K562 (cell line): ENCODE measurements at regions of chr17 and their contacts with region 1.

Region 1: DNA sequence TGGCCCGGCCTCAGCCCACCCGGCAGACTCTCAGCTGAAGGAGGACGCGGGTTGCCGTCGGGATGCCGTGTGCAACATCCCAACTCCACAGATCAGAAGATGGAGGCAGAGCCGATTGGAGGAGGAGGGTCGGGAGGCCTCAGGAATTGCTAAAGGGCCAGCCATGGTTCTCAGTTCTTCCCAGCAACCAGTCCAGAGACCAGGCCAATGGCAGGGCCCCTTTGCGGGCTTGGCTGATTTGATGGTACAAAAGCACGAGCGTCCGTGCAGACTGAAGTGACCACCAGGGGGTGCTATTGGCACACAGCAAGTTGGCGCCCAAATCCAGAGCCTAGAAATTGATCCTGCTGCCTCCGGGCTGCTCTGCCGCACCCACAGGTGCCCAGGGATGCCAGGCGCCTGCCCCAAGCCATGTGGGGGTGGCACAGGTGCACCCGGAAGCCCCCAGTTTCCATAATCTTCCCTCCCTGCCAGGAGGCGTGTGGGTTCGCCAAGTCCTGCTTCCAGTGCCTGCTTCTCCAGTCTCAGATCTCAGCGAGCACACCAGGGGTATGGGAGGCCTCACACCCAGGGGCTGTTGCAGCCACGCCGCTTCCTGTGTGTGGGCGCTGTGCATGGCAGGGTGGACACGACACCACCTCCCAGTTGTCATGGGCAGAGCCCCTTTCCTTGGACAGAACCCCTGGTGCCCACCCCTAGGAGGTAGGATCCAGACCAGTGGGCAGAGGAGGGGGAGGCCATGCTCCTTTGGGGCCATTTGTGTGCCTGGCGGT is 7.1 kb upstream of the TEX19 start:
- DNase-seq: peak; percentile 68 to 92 (median 74)
- ATAC-seq: peak; percentile 94
- H3K4me3 ChIP-seq: no peak overlapping the region
- H3K27ac ChIP-seq: no peak overlapping the region
- H3K4me1 ChIP-seq: peaks cover 11 to 59% of the 10 kb centered on the region in 2 experiments; a peak in 4 of 5 replicates
- H3K27me3 ChIP-seq: no peaks in the 10 kb centered on the region
- CTCF ChIP-seq: peak; percentile 90 to 95 (median 93)
- EP300 ChIP-seq: no peak
- POLR2A ChIP-seq: no peak
- RAD21 ChIP-seq: peak; percentile 87 to 94

Region 2: DNA sequence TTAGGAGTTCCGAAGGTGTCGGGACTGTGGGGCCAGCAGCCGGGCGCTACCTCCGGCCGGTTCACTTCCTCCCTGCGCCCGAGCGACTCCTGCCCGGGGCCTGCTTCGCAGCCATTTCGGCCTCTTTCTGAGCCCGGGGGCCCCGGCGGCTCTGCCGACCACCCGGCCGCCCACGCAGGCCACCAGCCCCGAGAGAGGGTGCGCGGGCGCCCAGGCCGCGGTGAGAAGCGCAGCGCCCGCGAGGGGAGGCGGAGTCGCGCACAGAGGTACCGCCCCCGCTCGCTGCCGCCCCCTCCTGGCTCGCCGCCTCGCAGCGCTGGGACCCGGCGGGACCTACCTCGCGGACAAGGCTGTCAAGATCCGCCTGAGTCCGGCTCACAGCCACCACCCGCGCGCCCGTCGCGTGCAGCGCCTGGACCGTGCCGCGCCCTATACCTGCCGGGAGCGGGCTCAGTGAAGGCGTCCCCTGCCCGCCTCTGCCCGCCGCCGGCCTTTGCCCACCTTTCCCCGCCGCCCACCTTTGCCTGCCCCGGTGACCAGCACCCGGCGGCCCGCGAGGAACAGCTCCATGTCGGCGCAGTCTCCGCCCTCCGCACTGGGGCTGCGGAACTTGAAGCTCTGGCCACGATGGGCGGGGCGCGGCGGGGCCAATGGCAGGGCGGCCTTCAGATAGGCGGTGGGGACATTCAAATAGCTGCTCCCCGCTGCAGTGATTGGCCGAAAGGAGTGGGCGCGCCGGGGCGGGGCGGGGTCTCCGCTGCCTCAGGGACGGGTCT is 314.6 kb before region 1 on chr17 and contains the start of gene DCXR:
- CTCF ChIA-PET with region 1: no interaction called
- POLR2A ChIA-PET with region 1: no interaction called
- in situ Hi-C with region 1: no loop called
- intact Hi-C with region 1: loop called (anchors 10 kb)
- DNase-seq: peak; percentile 95 to 99 (median 97)
- ATAC-seq: peak; percentile 95
- H3K4me3 ChIP-seq: peak within 1 kb of the TSS; percentile 97
- H3K27ac ChIP-seq: peak within 1 kb of the TSS; percentile 98
- H3K4me1 ChIP-seq: peaks cover 26 to 68% of the 10 kb centered on the region in 2 experiments
- H3K27me3 ChIP-seq: no peaks in the 10 kb centered on the region
- CTCF ChIP-seq: peak; percentile 81 to 95 (median 93)
- EP300 ChIP-seq: no peak
- POLR2A ChIP-seq: peak; percentile 99
- RAD21 ChIP-seq: peak; percentile 31 to 50
- polyA plus RNA-seq, gene DCXR: 21.3 to 50.3 TPM

Region 3: GRCh38 chr17:82494236-82495055 is 142.5 kb after region 1 on chr17:
- CTCF ChIA-PET with region 1: interaction called, 5 read pairs
- POLR2A ChIA-PET with region 1: no interaction called
- in situ Hi-C with region 1: no loop called
- intact Hi-C with region 1: loop called (anchors 10 kb)
- DNase-seq: peak; percentile 88 to 95 (median 92)
- ATAC-seq: peak; percentile 92
- H3K4me3 ChIP-seq: peak overlapping the region; percentile 44
- H3K27ac ChIP-seq: peak overlapping the region; percentile 50; the same call in 1 of the 3 replicates
- H3K4me1 ChIP-seq: peaks cover 5 to 48% of the 10 kb centered on the region in 2 experiments; a peak in 4 of 5 replicates
- H3K27me3 ChIP-seq: no peaks in the 10 kb centered on the region
- CTCF ChIP-seq: peak; percentile 79 to 97 (median 93)
- EP300 ChIP-seq: peak; percentile 56; the same call in 1 of the 2 replicates
- POLR2A ChIP-seq: no peak
- RAD21 ChIP-seq: peak; percentile 63 to 68

Region 4: GRCh38 chr17:82559566-82560251 is 207.8 kb after region 1 on chr17:
- CTCF ChIA-PET with region 1: interaction called, 12 read pairs
- POLR2A ChIA-PET with region 1: no interaction called
- in situ Hi-C with region 1: loop called (anchors 5 kb)
- intact Hi-C with region 1: loop called (anchors 5 kb)
- DNase-seq: peak in 1 of 4 experiments; percentile 30
- ATAC-seq: peak; percentile 28; the same call in 2 of the 3 replicates
- H3K4me3 ChIP-seq: no peak overlapping the region
- H3K27ac ChIP-seq: no peak overlapping the region
- H3K4me1 ChIP-seq: peaks cover 5 to 30% of the 10 kb centered on the region in 2 experiments
- H3K27me3 ChIP-seq: no peaks in the 10 kb centered on the region
- CTCF ChIP-seq: no peak
- EP300 ChIP-seq: no peak
- POLR2A ChIP-seq: no peak
- RAD21 ChIP-seq: no peak

Region 5: GRCh38 chr17:82781894-82782274 is 430.0 kb after region 1 on chr17:
- CTCF ChIA-PET with region 1: interaction called, 3 read pairs
- POLR2A ChIA-PET with region 1: no interaction called
- in situ Hi-C with region 1: loop called (anchors 5 kb)
- intact Hi-C with region 1: no loop called
- DNase-seq: peak; percentile 61 to 79 (median 74)
- ATAC-seq: peak; percentile 97
- H3K4me3 ChIP-seq: no peak overlapping the region
- H3K27ac ChIP-seq: no peak overlapping the region
- H3K4me1 ChIP-seq: peaks cover 0 to 10% of the 10 kb centered on the region in 2 experiments; a peak in 2 of 5 replicates
- H3K27me3 ChIP-seq: no peaks in the 10 kb centered on the region
- CTCF ChIP-seq: peak; percentile 85 to 93 (median 89)
- EP300 ChIP-seq: no peak
- POLR2A ChIP-seq: no peak
- RAD21 ChIP-seq: peak; percentile 87 to 90